Activated T-helper 1 cell treated with anti-CD3 and anti-CD28 coated beads, Interleukin-12 subunit alpha, Interleukin-12 subunit beta, Interleukin-2, Interleukin-4 antibody, amounts not matched to agents 30 ng/mL and 10 ng/mL and 1 ng/mL, durations not matched to agents 14 hours and 24 hours and 36 hours (primary cell): ENCODE measurements at regions of chr9 and their contacts with region 1.

Region 1: DNA sequence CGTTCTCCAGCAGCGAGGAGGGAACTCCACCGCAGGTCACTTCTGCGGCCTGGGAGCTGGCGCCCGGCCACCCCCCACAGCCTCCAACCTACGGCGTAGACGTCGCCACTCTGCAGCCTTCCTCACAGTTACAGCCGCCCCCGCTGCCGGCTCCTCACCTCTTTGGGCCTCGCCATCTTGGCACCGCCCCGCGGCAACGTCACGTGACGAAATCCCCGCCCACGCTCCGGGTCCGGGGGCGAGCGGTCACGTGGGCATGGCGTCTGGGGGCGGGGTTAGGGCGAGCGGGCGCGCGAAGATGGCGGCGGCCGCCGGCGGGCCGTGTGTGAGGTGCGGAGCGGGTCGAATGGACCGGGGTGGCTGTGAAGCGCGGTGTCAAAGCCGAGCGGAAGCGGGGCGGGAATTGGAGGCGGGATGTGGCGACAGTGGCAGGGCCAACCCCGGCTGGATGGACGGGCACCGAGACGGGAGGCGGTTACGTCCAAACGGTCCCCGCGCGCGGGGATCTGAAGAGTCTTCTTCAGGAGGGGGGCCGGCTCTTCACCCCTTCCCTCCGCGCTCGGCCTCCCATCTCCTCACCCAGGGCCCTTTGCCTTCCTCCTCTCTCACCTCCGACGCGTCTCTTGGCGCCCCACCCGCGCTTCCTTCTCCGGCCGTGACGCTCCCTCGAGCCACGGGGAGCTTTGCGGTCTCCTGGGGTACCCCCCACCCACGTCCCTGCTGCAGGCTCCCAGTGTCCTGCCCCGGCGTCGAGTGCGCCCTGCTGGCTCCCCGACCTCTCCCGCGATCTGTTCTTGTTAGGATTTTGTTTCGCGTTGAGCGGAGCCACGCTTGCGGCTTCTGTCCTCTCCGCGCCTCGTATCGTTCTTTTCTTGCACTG is at the starts of genes DOLK and NUP188:
- DNase-seq: peak; percentile 99
- H3K4me3 Mint-ChIP-seq: peak within 1 kb of the TSS; percentile 98
- H3K27ac Mint-ChIP-seq: peak within 1 kb of the TSS; percentile 99
- H3K4me1 Mint-ChIP-seq: peaks cover 37% of the 10 kb centered on the region
- H3K27me3 Mint-ChIP-seq: no peaks in the 10 kb centered on the region
- total RNA-seq, gene DOLK: 17.7 and 18.1 TPM in 2 replicates
- total RNA-seq, gene NUP188: 154 and 158 TPM in 2 replicates

Region 2: GRCh38 chr9:128688512-128689292 is 259.0 kb before region 1 on chr9 and contains the start of gene SET:
- intact Hi-C with region 1: loop called (anchors 2 kb)
- DNase-seq: peak; percentile 93
- H3K4me3 Mint-ChIP-seq: peak within 1 kb of the TSS; percentile 87
- H3K27ac Mint-ChIP-seq: peak within 1 kb of the TSS; percentile 98
- H3K4me1 Mint-ChIP-seq: peaks cover 66% of the 10 kb centered on the region
- H3K27me3 Mint-ChIP-seq: no peaks in the 10 kb centered on the region
- total RNA-seq, gene SET: 775 and 795 TPM in 2 replicates

Region 3: GRCh38 chr9:128771745-128772519 is 175.7 kb before region 1 on chr9 and contains the start of gene ZER1:
- intact Hi-C with region 1: loop called (anchors 1 kb)
- DNase-seq: peak; percentile 92
- H3K4me3 Mint-ChIP-seq: peak within 1 kb of the TSS; percentile 98
- H3K27ac Mint-ChIP-seq: peak within 1 kb of the TSS; percentile 95
- H3K4me1 Mint-ChIP-seq: peaks cover 14% of the 10 kb centered on the region
- H3K27me3 Mint-ChIP-seq: no peaks in the 10 kb centered on the region
- total RNA-seq, gene ZER1: 21.1 and 21.5 TPM in 2 replicates

Region 4: GRCh38 chr9:128863647-128864046 is 84.0 kb before region 1 on chr9:
- intact Hi-C with region 1: loop called (anchors 1 kb)
- DNase-seq: peak; percentile 77
- H3K4me3 Mint-ChIP-seq: no peak overlapping the region
- H3K27ac Mint-ChIP-seq: no peak overlapping the region
- H3K4me1 Mint-ChIP-seq: peaks cover 6% of the 10 kb centered on the region
- H3K27me3 Mint-ChIP-seq: no peaks in the 10 kb centered on the region

Region 5: GRCh38 chr9:129036241-129036922 is 88.7 kb after region 1 on chr9 and contains the start of gene MIGA2:
- intact Hi-C with region 1: loop called (anchors 1 kb)
- DNase-seq: peak; percentile 95
- H3K4me3 Mint-ChIP-seq: peak within 1 kb of the TSS; percentile 97
- H3K27ac Mint-ChIP-seq: peak within 1 kb of the TSS; percentile 79
- H3K4me1 Mint-ChIP-seq: peaks cover 20% of the 10 kb centered on the region
- H3K27me3 Mint-ChIP-seq: peaks cover 2% of the 10 kb centered on the region
- total RNA-seq, gene MIGA2: 43.4 and 43.8 TPM in 2 replicates

Region 6: GRCh38 chr9:129383561-129384416 is 436.1 kb after region 1 on chr9:
- intact Hi-C with region 1: no loop called
- DNase-seq: peak; percentile 55
- H3K4me3 Mint-ChIP-seq: peak overlapping the region; percentile 47
- H3K27ac Mint-ChIP-seq: no peak overlapping the region
- H3K4me1 Mint-ChIP-seq: no peaks in the 10 kb centered on the region
- H3K27me3 Mint-ChIP-seq: peaks cover 12% of the 10 kb centered on the region